RWPE1 (cell line): ENCODE measurements at regions of chr11 and their contacts with region 1.

Region 1: GRCh38 chr11:14300661-14301304 is 58.2 kb downstream of the RRAS2 start:
- DNase-seq: peak; percentile 72
- H3K27ac ChIP-seq: peak overlapping the region; percentile 32; the same call in 1 of the 2 replicates
- CTCF ChIP-seq: peak; percentile 85

Region 2: DNA sequence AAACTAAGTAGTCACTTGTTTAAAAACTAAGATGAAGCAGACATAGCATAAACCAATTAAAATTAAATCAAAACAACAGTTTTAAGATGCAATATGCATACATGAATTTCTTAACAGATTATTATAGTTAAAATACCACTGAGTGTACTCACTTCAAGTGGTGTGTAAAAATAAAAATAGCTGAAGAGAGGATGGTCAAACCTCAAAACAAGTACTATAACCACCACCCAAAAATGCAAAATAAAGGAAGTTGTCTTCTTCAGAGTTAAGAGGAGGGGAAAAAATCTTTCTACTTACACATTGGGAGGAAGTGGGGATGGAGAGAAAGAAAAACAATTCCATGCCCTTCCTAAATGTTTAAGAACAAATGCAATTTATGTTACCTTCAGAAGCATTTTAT is 26.3 kb after region 1 on chr11:
- CTCF ChIA-PET with region 1: no interaction called
- POLR2A ChIA-PET with region 1: no interaction called
- DNase-seq: no peak
- H3K27ac ChIP-seq: no peak overlapping the region
- CTCF ChIP-seq: no peak

Region 3: DNA sequence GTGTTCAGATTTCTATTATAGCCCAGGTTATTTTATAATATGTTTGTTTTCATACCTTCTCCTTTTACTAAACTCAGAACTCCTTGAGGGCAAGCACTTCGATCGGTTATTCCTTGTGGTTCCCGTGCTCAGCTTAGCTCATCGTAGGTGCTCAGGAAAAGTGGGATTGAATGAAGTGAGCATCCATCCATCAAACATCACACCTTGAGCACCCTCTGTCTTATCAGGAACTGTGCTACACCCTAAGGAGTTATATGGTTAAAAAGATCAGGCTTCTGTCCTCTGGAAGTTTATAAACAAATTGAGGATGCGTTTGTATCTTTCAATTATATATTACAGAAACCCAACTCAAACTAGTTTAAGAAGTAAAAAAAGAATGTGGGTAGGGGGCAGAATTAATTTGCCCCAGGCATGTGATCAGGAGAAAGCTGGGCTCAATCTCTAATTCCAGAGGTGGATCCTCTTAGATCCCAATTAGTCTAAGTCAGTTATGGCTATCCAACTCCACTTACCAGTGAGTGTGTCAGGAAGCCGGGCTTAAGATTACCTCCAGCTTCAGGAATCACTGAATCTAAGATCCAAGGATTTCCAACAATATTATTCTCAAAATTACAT is 118.1 kb after region 1 on chr11:
- CTCF ChIA-PET with region 1: interaction called, 19 read pairs
- POLR2A ChIA-PET with region 1: no interaction called
- DNase-seq: peak; percentile 51
- H3K27ac ChIP-seq: no peak overlapping the region
- CTCF ChIP-seq: no peak; the same call in 1 of the 2 replicates

Region 4: DNA sequence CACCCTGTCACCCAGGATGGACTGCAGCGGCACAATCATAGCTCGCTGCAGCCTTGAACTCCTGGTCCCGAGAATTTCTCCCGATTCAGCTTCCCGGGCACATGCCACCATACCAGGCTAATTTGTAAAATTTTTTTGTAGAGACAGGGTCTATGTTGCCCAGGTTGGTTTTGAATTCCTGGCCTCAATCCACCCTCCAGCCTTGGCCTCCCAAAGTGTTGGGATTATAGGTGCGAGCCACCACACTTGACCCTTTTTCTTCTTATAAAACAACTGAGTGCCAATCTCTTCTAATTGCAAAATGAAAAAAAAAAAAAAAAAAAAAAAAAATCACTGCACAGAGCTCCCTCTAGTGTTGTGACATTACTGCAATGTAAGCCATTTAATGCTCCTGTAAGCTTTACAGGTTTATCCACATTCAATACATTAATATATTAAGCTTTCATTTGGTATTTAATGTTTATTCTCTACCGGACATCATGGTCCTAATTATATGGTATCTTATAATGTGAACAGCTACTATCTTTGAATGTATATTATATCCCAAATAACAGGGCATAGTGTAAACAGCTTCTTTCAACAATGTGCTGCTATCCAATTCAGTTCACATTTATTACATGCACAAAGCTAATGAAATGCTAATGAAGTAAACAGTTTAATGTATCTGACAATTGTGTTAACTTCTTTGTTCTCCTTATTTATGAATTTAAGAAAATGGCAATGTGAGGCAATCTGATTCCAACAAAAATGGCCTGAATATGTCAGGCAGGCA is 154.3 kb after region 1 on chr11:
- CTCF ChIA-PET with region 1: interaction called, 26 read pairs
- POLR2A ChIA-PET with region 1: interaction called, 4 read pairs
- DNase-seq: peak; percentile 37
- H3K27ac ChIP-seq: no peak overlapping the region
- CTCF ChIP-seq: peak; percentile 77